Posterior vena cava (tissue), 2 donors: ENCODE measurements at regions of chr1 and their contacts with region 1.

Region 1: DNA sequence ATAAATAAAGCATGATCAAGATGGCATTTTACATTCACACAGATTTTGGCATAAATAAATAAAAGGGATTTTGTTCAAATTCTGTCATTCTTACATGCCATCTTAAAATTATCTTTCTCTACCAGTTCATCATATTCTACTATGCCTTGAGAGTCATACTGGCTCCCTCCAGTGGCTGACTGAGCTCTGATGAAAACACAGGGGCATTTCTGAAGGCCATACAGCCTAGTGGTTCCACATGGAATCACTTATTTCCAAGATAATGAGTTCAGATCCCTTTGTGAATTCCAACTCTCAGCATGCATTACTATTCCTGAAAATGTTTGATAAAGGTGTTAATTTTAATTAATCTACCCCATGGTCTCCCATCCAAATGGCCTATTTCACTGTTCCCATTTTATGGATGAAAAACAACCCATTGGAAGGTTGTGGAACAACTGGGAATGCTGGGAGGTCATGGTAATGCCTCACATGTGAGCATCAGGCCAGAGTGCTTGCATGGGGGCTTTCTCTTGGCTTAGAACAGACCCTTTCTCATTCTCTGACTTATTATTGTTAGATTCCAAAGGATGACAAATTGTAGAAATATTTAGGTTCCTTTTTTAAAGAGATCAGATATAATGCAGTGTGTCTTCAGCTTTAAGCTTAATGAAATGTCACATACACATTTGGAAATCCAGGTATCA is 622.4 kb upstream of the PKN2 start:
- DNase-seq: no peak

Region 2: DNA sequence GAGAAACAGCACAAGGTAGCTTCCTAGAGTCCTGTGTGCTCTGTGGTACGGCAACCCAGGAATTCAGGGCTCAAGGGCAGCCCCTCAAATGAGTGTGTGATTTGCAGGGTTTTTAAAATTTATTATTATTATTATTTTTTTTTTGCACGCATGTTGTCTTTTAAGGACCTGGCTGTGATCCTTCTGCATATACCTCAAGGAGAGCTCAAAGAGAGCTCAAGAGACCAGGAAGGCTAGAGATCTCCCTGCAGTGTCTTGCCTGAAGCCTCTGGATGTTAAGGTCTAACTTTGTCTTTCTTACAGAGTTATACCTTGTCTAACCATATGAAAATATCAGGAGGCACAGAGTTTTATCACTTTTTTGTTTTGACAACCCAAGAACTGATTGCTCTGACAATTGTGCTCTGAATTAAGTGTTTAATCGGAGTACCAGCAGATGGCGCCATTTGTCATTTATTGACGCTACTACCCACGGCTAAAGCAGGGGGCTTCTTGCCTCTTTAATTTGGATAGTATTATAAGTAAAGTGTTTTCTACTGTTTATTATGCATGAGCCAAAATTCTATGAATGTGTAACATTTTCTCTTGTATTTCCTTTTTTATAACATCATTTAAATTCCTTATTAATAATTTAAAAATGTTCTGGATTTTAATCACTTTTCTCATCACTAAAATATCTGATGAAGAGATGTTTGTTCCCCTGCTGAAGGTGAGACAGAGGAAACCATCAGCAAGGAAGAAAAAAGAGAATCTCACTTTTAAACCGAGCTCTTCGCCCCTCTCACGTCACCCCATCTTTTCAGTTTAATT is 768.7 kb before region 1 on chr1:
- intact Hi-C with region 1: loop called in 1 of 2 experiments (anchors 10 kb)
- DNase-seq: no peak

Region 3: DNA sequence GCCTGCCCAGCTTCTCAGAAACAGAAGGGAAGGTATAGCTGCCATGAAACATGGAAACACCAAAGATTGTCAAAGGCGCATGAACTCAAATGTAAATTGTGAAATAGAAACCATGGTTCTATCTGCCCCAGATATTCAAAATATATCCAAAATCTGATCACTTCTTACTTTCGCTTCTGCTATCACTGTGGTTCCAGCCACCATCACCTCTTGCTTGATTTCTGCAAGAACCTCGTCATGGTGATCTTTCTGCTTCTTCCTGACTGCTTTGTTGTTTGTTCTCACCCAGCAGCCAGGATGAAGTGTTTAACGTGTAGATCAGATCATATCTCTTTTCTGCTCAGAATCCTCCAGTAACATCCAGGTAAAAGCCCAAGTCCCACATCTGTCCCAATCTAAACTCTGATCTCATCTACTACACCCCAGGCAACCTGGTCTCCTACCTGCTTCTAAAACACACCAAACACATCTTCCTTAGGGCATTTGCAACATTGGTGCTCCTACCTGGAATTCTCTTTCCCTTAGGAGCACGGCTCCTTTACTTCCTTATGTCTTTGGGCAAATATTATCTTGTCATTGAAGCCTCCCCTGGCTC is 743.5 kb before region 1 on chr1:
- intact Hi-C with region 1: loop called (anchors 10 kb)
- DNase-seq: no peak

Region 4: DNA sequence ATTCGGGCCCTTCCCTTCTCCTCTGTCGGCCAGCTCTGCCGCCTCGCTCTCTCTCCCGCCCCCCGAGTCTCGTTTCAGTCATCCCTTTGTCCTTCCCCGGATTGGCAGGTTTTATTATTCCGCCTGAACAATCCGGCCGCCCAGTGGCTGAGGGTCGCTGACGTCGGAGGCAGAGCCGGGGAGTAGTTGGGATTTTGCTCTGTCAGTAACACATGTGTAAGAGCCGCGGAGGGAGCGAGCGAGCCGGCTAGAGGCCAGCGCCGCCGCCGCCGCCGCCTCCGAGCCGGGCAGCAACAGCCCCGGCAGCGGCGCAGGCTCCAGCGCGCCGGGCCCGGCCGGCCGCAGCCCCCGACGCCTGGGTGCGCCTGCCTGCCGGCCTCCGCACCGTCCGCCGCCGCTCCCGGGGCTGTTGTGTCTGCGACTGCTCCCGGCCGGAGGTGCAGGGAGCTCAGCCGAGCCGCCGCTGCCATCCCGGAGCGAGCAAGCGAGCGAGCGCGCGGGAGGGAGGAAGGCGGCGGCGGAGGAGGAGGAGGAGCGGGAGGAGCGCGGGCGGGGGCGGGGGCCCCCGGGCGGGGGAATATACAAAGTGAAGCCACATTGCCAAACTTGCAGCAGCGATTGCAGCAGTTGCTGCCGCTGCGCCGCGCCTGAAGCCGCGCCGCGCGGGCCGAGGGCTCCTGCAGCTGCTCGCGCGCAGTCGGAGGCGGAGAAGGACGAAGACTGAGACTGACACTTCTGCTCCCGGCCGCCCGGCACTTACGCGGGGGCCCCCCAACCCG is 733.2 kb before region 1 on chr1 and contains the start of gene LMO4:
- intact Hi-C with region 1: loop called in 1 of 2 experiments (anchors 10 kb)
- DNase-seq: peak; percentile 98
- total RNA-seq, gene LMO4: 56.7 to 64.4 TPM